ENCODE measurements at regions of chr2 and their contacts with region 1.

Region 1: DNA sequence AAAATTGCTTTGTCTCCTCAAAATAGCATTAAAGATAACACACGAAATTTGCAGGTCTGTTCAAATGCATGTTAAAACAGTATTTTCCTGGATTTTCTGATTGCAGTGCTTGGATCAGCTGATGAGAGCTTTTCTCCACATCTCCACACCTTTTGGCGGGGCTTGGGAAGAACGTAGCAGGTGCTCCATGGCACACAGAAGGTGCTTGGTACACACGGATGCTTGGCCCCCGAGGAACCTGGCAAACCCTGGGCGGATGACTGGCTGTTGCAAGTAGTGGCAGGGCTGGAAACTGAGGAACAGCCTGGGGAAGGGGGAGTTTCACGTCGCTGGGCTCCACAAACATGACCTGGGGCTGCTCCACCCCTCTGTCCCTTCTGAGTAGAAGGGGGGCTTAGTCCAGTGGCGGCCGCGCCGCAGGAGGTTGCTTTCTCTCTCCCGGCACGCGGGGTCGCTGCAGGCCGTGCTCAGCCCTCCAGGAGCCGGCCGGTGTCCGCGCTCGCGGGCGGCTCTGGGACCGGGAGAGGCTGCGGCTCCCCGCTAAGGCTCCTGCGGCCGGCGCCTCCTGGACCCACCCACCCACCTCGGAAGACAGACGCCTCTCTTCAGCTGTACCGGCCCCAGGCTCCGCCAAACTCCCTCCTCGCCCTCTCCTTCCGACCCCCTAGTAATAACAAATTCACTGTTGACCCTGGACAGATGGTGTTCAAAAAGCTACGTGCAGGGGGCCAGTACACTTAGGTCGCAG is 69.3 kb downstream of the MARCO start:
- DNase-seq: peak; percentile 49 to 51
- ATAC-seq: peak; percentile 95 to 98
- H3K4me3 ChIP-seq: 0 out of 3 replicates have a peak overlapping the region, but pooled peaks have one; percentile 27
- H3K27ac ChIP-seq: 0 out of 6 replicates have a peak overlapping the region, but pooled peaks of 1 of the 2 experiments have one; percentile 48
- H3K4me1 ChIP-seq: no peaks in the 10 kb centered on the region
- CTCF ChIP-seq: peak; percentile 68
- EP300 ChIP-seq: no peak
- POLR2A ChIP-seq: no peak
- RAD21 ChIP-seq: peak; percentile 72 to 87

Region 2: GRCh38 chr2:118902266-118903028 is 108.9 kb before region 1 on chr2:
- CTCF ChIA-PET with region 1: no interaction called
- POLR2A ChIA-PET with region 1: no interaction called
- DNase-seq: no peak
- ATAC-seq: no peak
- H3K4me3 ChIP-seq: no peak overlapping the region
- H3K27ac ChIP-seq: no peak overlapping the region
- H3K4me1 ChIP-seq: no peaks in the 10 kb centered on the region
- CTCF ChIP-seq: no peak
- EP300 ChIP-seq: no peak
- POLR2A ChIP-seq: no peak
- RAD21 ChIP-seq: no peak

Region 3: GRCh38 chr2:119025762-119026389 is 14.5 kb after region 1 on chr2:
- CTCF ChIA-PET with region 1: interaction called, 16 read pairs
- POLR2A ChIA-PET with region 1: no interaction called
- DNase-seq: no peak
- ATAC-seq: no peak; a peak in 1 of 6 replicates
- H3K4me3 ChIP-seq: no peak overlapping the region
- H3K27ac ChIP-seq: no peak overlapping the region
- H3K4me1 ChIP-seq: no peaks in the 10 kb centered on the region
- CTCF ChIP-seq: no peak
- EP300 ChIP-seq: no peak
- POLR2A ChIP-seq: no peak
- RAD21 ChIP-seq: no peak

Region 4: GRCh38 chr2:119283860-119284331 is 272.6 kb after region 1 on chr2:
- CTCF ChIA-PET with region 1: interaction called, 61 read pairs
- POLR2A ChIA-PET with region 1: no interaction called
- DNase-seq: no peak
- ATAC-seq: no peak
- H3K4me3 ChIP-seq: no peak overlapping the region
- H3K27ac ChIP-seq: no peak overlapping the region
- H3K4me1 ChIP-seq: no peaks in the 10 kb centered on the region
- CTCF ChIP-seq: no peak
- EP300 ChIP-seq: no peak
- POLR2A ChIP-seq: no peak
- RAD21 ChIP-seq: no peak

Measured in A549 (cell line).